ENCODE measurements at regions of chr12 and their contacts with region 1.

Region 1: GRCh38 chr12:75658901-75659383 is 147.5 kb upstream of the KRR1 start:
- DNase-seq: peak; percentile 61
- H3K4me3 Mint-ChIP-seq: peak overlapping the region; percentile 35
- H3K27ac Mint-ChIP-seq: no peak overlapping the region
- H3K4me1 Mint-ChIP-seq: peaks cover 26% of the 10 kb centered on the region
- H3K27me3 Mint-ChIP-seq: no peaks in the 10 kb centered on the region
- CTCF ChIP-seq: no peak

Region 2: GRCh38 chr12:75480469-75480949 is 178.4 kb before region 1 on chr12 and contains the start of gene GLIPR1:
- CTCF ChIA-PET with region 1: no interaction called
- POLR2A ChIA-PET with region 1: no interaction called
- intact Hi-C with region 1: no loop called
- DNase-seq: peak; percentile 95
- H3K4me3 Mint-ChIP-seq: peak within 1 kb of the TSS; percentile 66
- H3K27ac Mint-ChIP-seq: peak within 1 kb of the TSS; percentile 94
- H3K4me1 Mint-ChIP-seq: peaks cover 41% of the 10 kb centered on the region
- H3K27me3 Mint-ChIP-seq: no peaks in the 10 kb centered on the region
- CTCF ChIP-seq: no peak
- total RNA-seq, gene GLIPR1: 29.6 and 36.4 TPM in 2 replicates

Region 3: GRCh38 chr12:75491169-75491568 is 167.8 kb before region 1 on chr12:
- CTCF ChIA-PET with region 1: no interaction called
- POLR2A ChIA-PET with region 1: no interaction called
- intact Hi-C with region 1: no loop called
- DNase-seq: no peak
- H3K4me3 Mint-ChIP-seq: no peak overlapping the region
- H3K27ac Mint-ChIP-seq: no peak overlapping the region
- H3K4me1 Mint-ChIP-seq: peaks cover 13% of the 10 kb centered on the region
- H3K27me3 Mint-ChIP-seq: no peaks in the 10 kb centered on the region
- CTCF ChIP-seq: no peak

Region 4: GRCh38 chr12:75585330-75585729 is 73.6 kb before region 1 on chr12:
- CTCF ChIA-PET with region 1: no interaction called
- POLR2A ChIA-PET with region 1: no interaction called
- intact Hi-C with region 1: no loop called
- DNase-seq: peak; percentile 54
- H3K4me3 Mint-ChIP-seq: no peak overlapping the region
- H3K27ac Mint-ChIP-seq: no peak overlapping the region
- H3K4me1 Mint-ChIP-seq: no peaks in the 10 kb centered on the region
- H3K27me3 Mint-ChIP-seq: no peaks in the 10 kb centered on the region
- CTCF ChIP-seq: no peak

Region 5: GRCh38 chr12:75690296-75690955 is 31.5 kb after region 1 on chr12:
- CTCF ChIA-PET with region 1: interaction called, 4 read pairs
- POLR2A ChIA-PET with region 1: interaction called, 7 read pairs
- intact Hi-C with region 1: loop called (anchors 2 kb)
- DNase-seq: peak; percentile 97
- H3K4me3 Mint-ChIP-seq: peak overlapping the region; percentile 45
- H3K27ac Mint-ChIP-seq: peak overlapping the region; percentile 90
- H3K4me1 Mint-ChIP-seq: peaks cover 31% of the 10 kb centered on the region
- H3K27me3 Mint-ChIP-seq: no peaks in the 10 kb centered on the region
- CTCF ChIP-seq: no peak

Region 6: DNA sequence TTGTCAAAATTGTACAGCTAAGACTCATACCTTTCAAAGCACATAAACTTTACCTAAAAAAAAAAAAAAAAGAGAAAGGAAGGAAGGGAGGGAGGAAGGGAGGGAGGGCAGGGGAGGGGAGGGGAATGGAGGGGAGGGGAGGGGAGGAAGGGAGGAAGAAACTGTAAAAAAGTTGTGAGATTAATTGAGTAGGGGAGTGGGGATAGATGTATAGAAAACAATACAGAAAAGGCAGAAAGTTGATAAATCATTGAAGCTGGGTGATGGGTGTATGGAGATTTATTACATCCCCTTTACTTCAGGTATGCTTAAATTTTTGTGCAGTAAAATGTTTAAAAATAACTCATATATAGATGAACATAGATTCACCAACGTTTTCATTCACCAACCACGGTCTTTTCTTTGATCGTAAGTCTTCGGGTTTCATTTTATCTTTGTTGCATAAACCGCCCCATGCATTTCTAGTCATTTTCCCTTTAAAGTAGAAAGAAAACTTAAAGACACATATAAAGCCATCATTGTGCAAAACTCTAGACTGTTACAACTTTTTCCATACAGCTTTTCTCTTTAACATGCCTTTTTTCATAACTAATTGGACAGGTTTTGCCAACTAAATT is 43.6 kb after region 1 on chr12:
- CTCF ChIA-PET with region 1: no interaction called
- POLR2A ChIA-PET with region 1: no interaction called
- intact Hi-C with region 1: no loop called
- DNase-seq: no peak
- H3K4me3 Mint-ChIP-seq: no peak overlapping the region
- H3K27ac Mint-ChIP-seq: no peak overlapping the region
- H3K4me1 Mint-ChIP-seq: peaks cover 5% of the 10 kb centered on the region
- H3K27me3 Mint-ChIP-seq: no peaks in the 10 kb centered on the region
- CTCF ChIP-seq: no peak

Region 7: GRCh38 chr12:75722714-75723200 is 63.8 kb after region 1 on chr12:
- CTCF ChIA-PET with region 1: no interaction called
- POLR2A ChIA-PET with region 1: interaction called, 4 read pairs
- intact Hi-C with region 1: loop called (anchors 5 kb)
- DNase-seq: peak; percentile 92
- H3K4me3 Mint-ChIP-seq: peak overlapping the region; percentile 5
- H3K27ac Mint-ChIP-seq: peak overlapping the region; percentile 94
- H3K4me1 Mint-ChIP-seq: peaks cover 49% of the 10 kb centered on the region
- H3K27me3 Mint-ChIP-seq: no peaks in the 10 kb centered on the region
- CTCF ChIP-seq: no peak